Lower leg skin (tissue), 4 donors: ENCODE measurements at regions of chr6 and their contacts with region 1.

Region 1: DNA sequence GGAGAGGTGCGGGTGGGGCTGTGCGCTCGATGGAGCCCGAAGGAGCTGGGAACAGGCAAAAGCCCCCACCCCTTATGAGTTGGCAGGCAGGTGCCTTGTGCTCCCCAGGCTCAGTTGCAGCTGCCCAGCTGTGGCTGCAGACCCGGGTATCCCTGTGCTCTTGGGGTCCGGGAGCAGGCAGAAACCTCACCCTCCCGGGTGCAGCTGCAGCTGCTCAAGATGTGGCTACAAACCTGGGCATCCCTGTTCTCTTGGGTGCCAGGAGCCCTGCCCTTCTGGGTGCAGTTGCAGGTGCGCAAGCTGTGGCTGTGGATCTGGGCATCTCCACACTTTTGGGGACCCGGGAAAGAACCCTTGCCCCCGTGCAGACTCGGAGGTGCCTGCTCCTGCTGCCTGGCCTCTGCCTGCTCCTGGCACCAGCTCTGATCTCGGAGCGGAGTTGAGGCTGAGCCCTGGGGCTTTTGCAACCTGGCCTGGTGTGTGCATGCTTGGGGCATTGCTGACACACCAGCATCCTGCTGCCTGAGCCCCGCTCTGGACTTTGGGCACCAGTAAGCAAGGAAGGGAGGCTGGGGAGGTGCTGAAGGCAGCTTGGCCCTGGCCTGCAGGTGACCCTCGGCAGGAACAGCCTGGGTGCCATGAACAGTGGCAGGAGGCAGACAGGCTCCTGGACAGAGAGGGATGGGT is 21.6 kb downstream of the OR2J3 start:
- DNase-seq: no peak
- H3K4me3 ChIP-seq: no peak overlapping the region
- CTCF ChIP-seq: no peak
- POLR2A ChIP-seq: no peak

Region 2: GRCh38 chr6:27439371-27439770 is 1690.1 kb before region 1 on chr6:
- intact Hi-C with region 1: loop called (anchors 5 kb)
- DNase-seq: no peak
- H3K4me3 ChIP-seq: no peak overlapping the region
- CTCF ChIP-seq: no peak
- POLR2A ChIP-seq: no peak

Region 3: DNA sequence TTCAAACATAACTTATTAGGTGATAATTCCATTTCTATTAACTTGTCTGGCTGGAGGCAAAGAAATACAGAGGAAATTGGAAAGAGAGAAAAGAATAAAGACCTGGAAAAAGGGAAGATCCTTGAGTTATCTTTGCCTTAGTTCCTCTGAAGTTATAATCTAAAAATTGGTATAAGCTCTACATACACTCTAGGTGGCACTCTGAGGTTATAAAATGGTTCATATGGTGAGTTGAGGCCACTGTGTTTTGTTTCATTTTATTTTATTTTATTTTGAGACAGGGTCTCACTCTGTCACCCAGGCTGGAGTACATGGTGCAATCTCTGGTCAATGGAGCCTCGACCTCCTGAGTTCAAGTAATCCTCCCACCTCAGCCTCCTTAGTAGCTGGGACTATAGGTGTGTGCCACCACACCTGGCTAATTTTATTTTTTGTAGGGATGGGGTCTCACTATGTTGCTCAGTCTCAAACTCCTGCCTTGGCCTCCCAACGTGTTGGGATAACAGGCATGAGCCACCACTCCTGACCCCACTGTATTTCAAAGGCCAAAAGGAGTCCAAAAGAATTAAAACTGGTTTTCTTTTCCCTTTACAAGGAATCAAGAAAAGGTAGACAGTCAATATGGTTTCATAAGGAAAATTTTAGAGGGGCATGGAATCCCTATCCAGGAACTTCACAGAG is 633.2 kb before region 1 on chr6:
- intact Hi-C with region 1: no loop called
- DNase-seq: no peak
- H3K4me3 ChIP-seq: no peak overlapping the region
- CTCF ChIP-seq: no peak
- POLR2A ChIP-seq: no peak